Cardiac septum (tissue), 1 donor: ENCODE measurements at regions of chr1 and their contacts with region 1.

Region 1: DNA sequence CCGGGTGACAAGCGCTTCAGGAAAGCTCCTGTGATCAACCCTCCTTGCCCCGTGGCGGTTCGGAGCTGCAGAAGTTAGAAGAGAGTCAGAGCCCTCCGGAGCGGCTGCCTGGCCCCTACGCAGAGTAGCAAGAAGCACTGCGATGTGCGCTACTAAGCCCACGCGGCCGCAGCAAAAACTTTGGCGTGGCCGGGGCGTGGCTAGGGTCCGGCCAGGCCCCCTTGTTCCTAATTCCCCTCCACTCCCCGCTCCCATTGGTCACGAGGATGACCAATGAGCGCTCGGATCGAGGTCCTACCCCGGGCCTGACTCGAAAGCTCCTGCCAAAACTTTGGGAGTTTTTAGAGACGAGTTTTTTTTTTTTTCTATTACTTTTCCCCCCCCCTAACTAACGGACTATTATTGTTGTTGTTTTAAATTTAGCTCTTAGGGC is at the start of gene HLX:
- DNase-seq: peak; percentile 98
- total RNA-seq, gene HLX: 8.1 TPM

Region 2: DNA sequence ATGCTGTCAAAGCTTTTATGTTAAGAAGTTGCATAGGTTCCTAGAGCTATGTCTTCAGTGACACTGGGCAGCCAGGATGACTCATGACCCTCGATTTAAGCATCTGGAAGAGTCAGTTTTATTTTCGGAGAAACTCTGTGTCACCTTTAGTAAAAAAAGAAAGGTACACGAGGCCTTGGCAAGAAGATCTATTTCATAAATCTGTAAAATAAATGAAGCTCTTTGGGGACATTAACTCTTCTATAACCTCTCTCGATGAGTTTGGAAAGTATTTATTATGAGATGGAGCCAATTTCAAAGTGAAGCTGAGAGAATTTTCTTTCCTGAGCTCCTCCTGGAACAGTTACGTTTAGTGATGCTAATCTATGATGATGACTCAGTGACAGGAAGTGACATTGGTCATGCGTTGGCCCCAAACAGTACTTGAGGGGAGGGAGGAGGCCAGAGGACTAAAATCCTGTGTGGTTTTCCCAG is 156.6 kb after region 1 on chr1:
- intact Hi-C with region 1: loop called (anchors 2 kb)
- DNase-seq: no peak

Region 3: DNA sequence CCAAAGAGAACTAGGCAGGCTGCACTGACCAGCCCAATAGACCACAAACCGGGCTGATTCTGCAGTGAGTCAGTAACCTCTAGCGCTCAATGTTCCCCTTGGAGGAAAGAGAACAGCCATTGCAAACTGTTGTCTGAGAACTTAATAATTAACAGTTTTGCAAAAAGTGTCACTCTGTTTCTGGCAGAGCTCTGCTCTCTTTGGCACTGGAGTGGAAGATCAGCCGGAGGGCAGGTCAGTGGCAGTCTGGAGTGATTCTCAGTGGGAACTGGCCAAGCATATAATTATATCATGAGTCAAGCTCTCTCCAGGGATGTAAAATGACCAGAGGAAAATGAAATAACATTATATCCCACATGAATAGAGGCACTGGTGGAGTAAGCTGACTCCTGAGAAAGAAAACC is 238.5 kb after region 1 on chr1:
- intact Hi-C with region 1: loop called (anchors 5 kb)
- DNase-seq: no peak

Region 4: GRCh38 chr1:221203224-221204054 is 324.3 kb after region 1 on chr1:
- intact Hi-C with region 1: loop called (anchors 5 kb)
- DNase-seq: peak; percentile 89